ENCODE measurements at regions of chr9 and their contacts with region 1.

Region 1: DNA sequence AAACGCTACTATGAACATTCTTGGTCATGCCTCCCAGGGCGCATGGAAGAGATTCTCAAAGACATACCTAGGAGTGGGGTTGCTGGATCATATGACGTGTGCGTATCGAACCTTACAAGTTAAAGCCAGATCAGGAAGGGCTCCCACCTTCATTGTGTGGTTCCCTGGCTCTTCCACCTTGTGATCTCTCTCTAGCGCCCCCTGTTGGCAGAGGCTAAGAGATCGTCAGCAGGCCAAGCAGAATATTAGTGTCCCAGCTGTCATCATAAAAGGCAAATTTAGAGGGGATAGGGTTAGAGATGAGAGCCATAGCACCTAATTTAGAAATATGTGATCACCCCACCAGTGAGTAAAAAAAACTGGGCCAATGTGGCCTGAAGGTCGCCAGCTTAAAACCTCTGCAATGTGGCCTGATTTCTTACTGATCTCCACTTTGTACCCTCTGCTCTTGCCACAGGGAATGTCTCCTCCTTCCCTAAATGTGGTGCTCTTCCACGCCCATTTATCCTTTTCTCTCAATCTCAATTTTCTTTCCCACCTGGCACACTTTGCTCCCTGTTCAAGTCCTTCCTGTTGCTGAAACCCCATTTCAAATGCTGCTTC is 91.7 kb upstream of the SHB start:
- DNase-seq: peak in 1 of 2 donors; percentile 70
- H3K4me3 ChIP-seq: no peak overlapping the region
- H3K27ac ChIP-seq: no peak overlapping the region
- H3K4me1 ChIP-seq: no peaks in the 10 kb centered on the region
- H3K27me3 ChIP-seq: no peaks in the 10 kb centered on the region
- CTCF ChIP-seq: peak; percentile 57 to 70 (median 69)

Region 2: DNA sequence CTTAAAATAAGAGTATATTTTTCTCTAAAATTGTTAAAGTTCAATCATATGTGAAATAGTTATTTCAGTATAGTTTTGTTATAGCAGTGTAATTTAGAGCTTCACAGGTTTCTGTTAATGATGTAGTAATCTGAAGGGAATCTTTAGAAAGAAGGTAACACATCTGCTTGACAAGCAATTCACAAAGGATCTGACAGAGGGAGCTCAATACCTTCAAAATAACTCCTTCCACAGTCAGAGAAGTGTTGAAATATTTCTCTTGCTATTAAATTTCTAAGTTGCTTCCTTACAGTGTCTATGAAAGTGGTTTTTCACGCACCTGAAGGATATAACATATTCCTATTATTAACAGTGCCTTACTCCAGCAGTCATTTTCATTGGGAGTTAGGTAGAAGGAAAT is 301.7 kb before region 1 on chr9:
- intact Hi-C with region 1: no loop called
- DNase-seq: no peak
- H3K4me3 ChIP-seq: no peak overlapping the region
- H3K27ac ChIP-seq: no peak overlapping the region
- H3K4me1 ChIP-seq: no peaks in the 10 kb centered on the region
- H3K27me3 ChIP-seq: no peaks in the 10 kb centered on the region
- CTCF ChIP-seq: no peak

Region 3: GRCh38 chr9:37913480-37914153 is 247.1 kb before region 1 on chr9:
- intact Hi-C with region 1: loop called (anchors 2 kb)
- DNase-seq: peak; percentile 41 to 90
- H3K4me3 ChIP-seq: no peak overlapping the region
- H3K27ac ChIP-seq: no peak overlapping the region
- H3K4me1 ChIP-seq: no peaks in the 10 kb centered on the region
- H3K27me3 ChIP-seq: no peaks in the 10 kb centered on the region
- CTCF ChIP-seq: peak; percentile 91 to 99 (median 95)

Region 4: DNA sequence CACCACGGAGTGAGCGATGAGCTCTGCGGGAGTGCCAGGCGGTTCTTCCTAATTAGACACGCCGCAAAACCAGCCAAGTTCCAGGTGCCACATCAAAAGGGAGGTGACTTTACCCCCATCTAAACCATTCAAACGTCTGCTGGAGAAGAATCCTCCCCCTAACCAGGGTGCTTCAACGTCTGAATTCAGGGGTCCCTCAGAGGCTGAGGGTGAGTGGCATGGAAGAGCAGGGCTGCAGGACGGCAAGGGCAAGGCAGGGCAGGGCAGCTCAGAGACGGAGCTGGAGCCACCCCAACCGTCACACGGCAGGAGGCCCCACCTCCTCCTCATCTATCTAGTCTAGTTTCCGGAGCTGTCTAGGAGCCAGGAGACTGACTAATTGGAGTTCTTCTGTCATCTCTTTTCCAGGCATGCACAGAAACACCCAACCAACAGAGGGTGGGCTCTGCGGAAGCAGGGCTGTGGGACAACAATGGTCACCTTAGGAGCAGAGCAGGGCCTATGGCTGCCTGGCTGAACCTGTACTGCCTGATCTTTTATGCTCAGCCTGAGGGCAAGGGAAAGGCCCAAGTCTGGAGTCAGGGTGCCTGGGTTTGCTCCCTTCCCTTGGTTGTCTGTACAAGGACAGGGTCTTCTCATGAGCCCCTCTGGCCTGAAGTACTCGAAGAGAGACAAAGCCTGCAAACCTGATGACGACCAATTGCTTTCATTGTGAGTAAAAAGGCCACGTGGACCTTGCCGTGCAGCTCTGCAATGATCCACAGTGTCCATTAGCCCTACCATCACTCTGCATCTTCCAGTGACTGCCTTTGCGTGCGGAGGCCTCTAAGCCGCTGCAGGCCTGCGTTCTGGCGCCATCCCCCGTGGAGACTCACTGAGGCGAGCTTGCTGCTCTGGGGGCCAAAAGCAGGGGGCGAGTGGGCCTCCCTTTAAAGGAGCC is 175.8 kb before region 1 on chr9:
- intact Hi-C with region 1: loop called (anchors 10 kb)
- DNase-seq: no peak
- H3K4me3 ChIP-seq: no peak overlapping the region
- H3K27ac ChIP-seq: no peak overlapping the region
- H3K4me1 ChIP-seq: no peaks in the 10 kb centered on the region
- H3K27me3 ChIP-seq: no peaks in the 10 kb centered on the region
- CTCF ChIP-seq: no peak